ENCODE measurements at regions of chr16 and their contacts with region 1.

Region 1: DNA sequence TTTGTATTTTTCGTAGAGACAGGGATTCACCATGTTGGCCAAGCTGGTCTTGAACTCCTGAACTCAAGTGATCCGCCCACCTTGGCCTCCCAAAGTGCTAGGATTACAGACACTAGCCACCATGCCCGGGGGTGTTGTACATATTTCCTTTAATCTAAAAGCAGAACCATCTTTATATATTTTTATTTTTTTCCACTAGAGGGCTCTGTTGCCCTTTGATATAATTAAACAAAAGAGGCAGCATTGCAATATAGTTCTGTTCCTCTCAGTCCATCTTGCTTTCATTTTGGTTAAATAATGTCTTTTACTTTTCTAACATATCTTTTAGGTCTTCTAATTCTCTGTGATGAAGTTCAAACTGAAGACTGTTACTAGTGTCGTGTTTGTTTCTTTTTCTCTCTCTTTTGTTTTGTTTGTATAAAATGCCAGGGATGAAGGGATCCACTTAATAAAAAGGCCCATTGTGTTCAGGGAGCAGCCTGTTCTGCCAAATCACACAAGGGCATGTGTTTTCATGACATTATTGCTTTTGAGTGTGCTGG is 23.4 kb downstream of the WWOX start:
- DNase-seq: no peak
- H3K4me3 ChIP-seq: no peak overlapping the region
- H3K27ac ChIP-seq: peak overlapping the region in 2 of 4 donors; percentile 29 to 44
- H3K4me1 ChIP-seq: peaks cover 0 to 14% (median 10%) of the 10 kb centered on the region in 4 donors
- H3K27me3 ChIP-seq: no peaks in the 10 kb centered on the region
- CTCF ChIP-seq: peak in 3 of 4 experiments; percentile 42 to 51 (median 45)
- EP300 ChIP-seq: no peak
- POLR2A ChIP-seq: no peak

Region 2: GRCh38 chr16:78147896-78148535 is 25.2 kb after region 1 on chr16:
- intact Hi-C with region 1: no loop called
- DNase-seq: no peak
- H3K4me3 ChIP-seq: no peak overlapping the region
- H3K27ac ChIP-seq: no peak overlapping the region
- H3K4me1 ChIP-seq: no peaks in the 10 kb centered on the region
- H3K27me3 ChIP-seq: no peaks in the 10 kb centered on the region
- CTCF ChIP-seq: no peak
- EP300 ChIP-seq: no peak
- POLR2A ChIP-seq: no peak

Region 3: DNA sequence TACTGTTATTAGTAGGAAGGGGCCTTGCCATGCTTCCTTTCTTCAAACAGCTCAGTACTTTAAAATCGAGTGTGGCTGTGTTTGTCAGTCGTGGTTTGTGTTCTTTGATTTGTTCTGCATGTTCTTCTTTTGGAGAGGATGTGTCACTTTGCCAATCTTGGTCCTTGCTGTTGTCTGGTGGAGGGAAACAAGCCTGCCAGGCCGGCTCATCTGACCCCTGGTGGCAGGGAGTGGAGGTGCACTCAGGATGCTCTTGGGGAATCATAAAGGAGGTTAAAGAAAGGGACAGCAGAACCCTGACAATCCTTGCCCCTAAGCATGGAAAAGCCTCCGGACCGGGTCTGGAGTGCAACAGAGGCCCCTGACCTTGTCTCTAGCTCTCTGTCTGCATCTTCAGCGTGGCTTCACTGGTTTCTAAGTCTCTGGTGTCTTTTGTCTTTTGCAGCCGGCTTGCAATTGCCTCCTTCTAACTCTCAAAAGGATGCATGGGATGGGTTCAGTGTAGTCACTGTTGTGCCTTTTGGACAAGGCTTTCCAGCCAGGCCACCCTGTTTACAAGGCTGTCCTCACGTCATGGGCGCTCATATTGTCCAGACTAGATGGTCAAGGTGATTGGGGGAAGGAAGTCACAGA is 112.4 kb after region 1 on chr16:
- intact Hi-C with region 1: loop called (anchors 2 kb)
- DNase-seq: peak; percentile 72
- H3K4me3 ChIP-seq: no peak overlapping the region
- H3K27ac ChIP-seq: no peak overlapping the region
- H3K4me1 ChIP-seq: peaks cover 0 to 20% (median 15%) of the 10 kb centered on the region in 4 donors
- H3K27me3 ChIP-seq: no peaks in the 10 kb centered on the region
- CTCF ChIP-seq: peak; percentile 46 to 87 (median 78)
- EP300 ChIP-seq: no peak
- POLR2A ChIP-seq: no peak

Region 4: DNA sequence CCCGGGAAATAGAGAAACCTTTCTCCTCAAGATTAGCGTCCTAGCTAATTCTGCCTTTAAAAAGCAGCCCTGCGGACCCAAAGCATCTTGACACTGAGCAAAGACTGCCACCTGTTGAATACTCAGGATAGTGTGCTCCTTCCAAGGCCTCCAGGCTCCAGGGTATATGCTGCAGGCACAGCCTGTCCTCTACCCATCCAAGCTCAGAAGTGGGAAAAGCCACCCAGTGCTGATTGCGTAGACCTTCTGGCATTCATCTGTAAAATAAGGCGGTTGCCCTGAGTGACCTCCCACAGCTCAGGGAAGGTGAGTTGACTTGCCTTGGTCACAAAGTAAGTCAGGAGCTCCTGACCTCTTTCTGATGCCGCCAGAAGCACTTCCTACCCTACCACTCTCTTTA is 1961.8 kb after region 1 on chr16:
- intact Hi-C with region 1: loop called (anchors 10 kb)
- DNase-seq: peak; percentile 82
- H3K4me3 ChIP-seq: no peak overlapping the region
- H3K27ac ChIP-seq: no peak overlapping the region
- H3K4me1 ChIP-seq: peaks cover 0 to 6% (median 2%) of the 10 kb centered on the region in 4 donors
- H3K27me3 ChIP-seq: no peaks in the 10 kb centered on the region
- CTCF ChIP-seq: peak in 3 of 4 experiments; percentile 54 to 74 (median 73)
- EP300 ChIP-seq: no peak
- POLR2A ChIP-seq: no peak

Measured in sigmoid colon (tissue), 7 donors.